Activated CD8-positive, alpha-beta T cell treated with anti-CD3 and anti-CD28 coated beads for 36 hours (primary cell): ENCODE measurements at regions of chr12 and their contacts with region 1.

Region 1: DNA sequence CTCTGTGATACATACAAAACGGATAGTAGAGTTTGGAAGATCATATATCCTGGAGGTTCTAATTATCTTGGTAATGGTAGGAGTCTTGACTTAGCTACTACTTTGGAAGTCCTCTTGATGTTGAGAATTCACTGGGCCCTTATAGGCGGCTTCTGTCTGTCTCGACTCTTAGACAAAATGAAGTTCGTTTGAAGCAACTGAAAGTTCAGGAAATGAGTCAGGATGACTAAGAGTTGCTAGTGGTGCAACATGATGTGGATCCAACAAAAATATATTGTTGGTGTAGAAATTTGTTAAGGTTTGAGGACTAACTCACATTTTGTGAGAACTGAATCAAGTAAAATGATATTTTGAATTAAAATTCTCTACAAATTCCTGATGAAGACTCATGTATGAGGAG is 272.7 kb downstream of the AEBP2 start:
- DNase-seq: no peak
- ATAC-seq: no peak
- H3K4me3 Mint-ChIP-seq: no peak overlapping the region
- H3K27ac Mint-ChIP-seq: no peak overlapping the region
- H3K4me1 Mint-ChIP-seq: peaks cover 5% of the 10 kb centered on the region
- H3K27me3 Mint-ChIP-seq: no peaks in the 10 kb centered on the region
- CTCF ChIP-seq: no peak

Region 2: DNA sequence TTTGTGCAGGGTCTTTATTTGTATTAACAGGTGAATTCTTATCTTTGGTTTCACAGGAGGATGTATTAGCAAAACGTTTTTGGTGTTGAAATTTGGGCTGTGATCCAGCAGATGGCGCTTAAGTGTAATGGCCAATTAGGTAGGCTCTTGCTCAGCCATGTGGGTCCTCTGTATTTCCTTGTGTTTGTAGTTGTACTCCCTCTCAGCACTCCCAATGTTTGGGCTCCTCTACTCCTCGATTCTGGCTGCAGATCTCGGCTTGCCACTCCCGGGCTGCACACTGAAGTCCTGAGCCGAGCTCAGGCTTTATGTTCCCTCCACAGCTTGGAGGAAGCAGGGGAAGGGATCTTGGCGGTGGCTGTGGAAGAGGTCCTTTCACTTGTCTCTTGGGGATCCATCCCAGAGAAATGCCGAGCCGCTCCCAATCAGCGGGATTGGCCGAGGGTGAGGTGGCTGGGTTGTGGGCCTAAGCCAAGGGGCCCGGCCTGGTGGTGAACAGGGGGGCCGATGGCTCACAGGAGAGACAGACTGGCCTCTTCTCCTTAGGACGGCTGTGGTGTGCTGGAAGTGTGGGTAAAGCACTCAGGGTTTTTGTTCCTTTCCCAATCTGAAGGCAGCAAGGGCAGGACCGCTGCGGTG is 139.0 kb before region 1 on chr12:
- CTCF ChIA-PET with region 1: no interaction called
- POLR2A ChIA-PET with region 1: no interaction called
- intact Hi-C with region 1: loop called (anchors 10 kb)
- DNase-seq: peak; percentile 67
- ATAC-seq: peak; percentile 64
- H3K4me3 Mint-ChIP-seq: no peak overlapping the region
- H3K27ac Mint-ChIP-seq: no peak overlapping the region
- H3K4me1 Mint-ChIP-seq: peaks cover 4% of the 10 kb centered on the region
- H3K27me3 Mint-ChIP-seq: no peaks in the 10 kb centered on the region
- CTCF ChIP-seq: peak; percentile 66

Region 3: GRCh38 chr12:19683178-19683927 is 28.7 kb before region 1 on chr12:
- CTCF ChIA-PET with region 1: no interaction called
- POLR2A ChIA-PET with region 1: no interaction called
- intact Hi-C with region 1: no loop called
- DNase-seq: no peak
- ATAC-seq: no peak
- H3K4me3 Mint-ChIP-seq: no peak overlapping the region
- H3K27ac Mint-ChIP-seq: no peak overlapping the region
- H3K4me1 Mint-ChIP-seq: peaks cover 36% of the 10 kb centered on the region
- H3K27me3 Mint-ChIP-seq: no peaks in the 10 kb centered on the region
- CTCF ChIP-seq: no peak

Region 4: GRCh38 chr12:19739183-19739776 is 27.2 kb after region 1 on chr12:
- CTCF ChIA-PET with region 1: interaction called, 10 read pairs
- POLR2A ChIA-PET with region 1: no interaction called
- intact Hi-C with region 1: no loop called
- DNase-seq: peak; percentile 59
- ATAC-seq: no peak
- H3K4me3 Mint-ChIP-seq: no peak overlapping the region
- H3K27ac Mint-ChIP-seq: no peak overlapping the region
- H3K4me1 Mint-ChIP-seq: no peaks in the 10 kb centered on the region
- H3K27me3 Mint-ChIP-seq: no peaks in the 10 kb centered on the region
- CTCF ChIP-seq: peak; percentile 72